ENCODE measurements at regions of chr19 and their contacts with region 1.

Region 1: DNA sequence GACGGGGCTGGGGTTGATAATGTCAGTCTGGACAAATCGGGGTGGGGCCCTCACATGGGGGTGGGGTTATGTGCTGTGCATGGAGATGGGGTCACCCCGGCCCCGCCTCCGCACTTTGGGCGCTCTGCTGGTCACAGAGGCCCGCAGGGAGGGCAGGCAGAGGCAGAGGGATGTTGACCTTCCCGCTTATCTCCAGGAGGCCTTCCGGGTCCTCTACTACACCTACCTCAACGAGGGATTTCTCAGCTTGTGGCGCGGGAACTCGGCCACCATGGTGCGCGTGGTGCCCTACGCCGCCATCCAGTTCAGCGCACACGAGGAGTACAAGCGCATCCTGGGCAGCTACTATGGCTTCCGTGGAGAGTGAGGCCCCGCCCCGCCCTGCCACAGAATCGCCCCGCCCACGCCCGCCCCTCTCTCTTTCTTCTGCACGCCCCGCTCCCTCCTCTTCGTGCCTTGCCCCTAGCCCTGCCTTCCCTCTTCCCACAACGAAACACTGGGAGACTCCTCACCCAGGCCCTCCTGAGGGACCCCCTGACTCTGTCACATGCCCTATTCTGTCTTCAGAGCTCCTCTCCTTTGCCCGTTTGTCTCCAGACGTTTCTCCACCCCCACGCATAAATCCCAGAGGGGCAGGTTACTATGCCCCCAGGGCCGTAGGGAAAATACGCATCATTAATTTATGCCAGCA is 32.8 kb downstream of the TMEM161A start:
- DNase-seq: peak; percentile 92 to 95 (median 93)
- ATAC-seq: peak; percentile 96
- H3K4me3 ChIP-seq: peak overlapping the region; percentile 41
- H3K27ac ChIP-seq: peak overlapping the region; percentile 75
- H3K4me1 ChIP-seq: peaks cover 14 to 45% of the 10 kb centered on the region in 2 experiments
- H3K27me3 ChIP-seq: no peaks in the 10 kb centered on the region
- CTCF ChIP-seq: no peak
- EP300 ChIP-seq: peak; percentile 5; the same call in 1 of the 2 replicates
- POLR2A ChIP-seq: peak; percentile 89
- RAD21 ChIP-seq: no peak

Region 2: DNA sequence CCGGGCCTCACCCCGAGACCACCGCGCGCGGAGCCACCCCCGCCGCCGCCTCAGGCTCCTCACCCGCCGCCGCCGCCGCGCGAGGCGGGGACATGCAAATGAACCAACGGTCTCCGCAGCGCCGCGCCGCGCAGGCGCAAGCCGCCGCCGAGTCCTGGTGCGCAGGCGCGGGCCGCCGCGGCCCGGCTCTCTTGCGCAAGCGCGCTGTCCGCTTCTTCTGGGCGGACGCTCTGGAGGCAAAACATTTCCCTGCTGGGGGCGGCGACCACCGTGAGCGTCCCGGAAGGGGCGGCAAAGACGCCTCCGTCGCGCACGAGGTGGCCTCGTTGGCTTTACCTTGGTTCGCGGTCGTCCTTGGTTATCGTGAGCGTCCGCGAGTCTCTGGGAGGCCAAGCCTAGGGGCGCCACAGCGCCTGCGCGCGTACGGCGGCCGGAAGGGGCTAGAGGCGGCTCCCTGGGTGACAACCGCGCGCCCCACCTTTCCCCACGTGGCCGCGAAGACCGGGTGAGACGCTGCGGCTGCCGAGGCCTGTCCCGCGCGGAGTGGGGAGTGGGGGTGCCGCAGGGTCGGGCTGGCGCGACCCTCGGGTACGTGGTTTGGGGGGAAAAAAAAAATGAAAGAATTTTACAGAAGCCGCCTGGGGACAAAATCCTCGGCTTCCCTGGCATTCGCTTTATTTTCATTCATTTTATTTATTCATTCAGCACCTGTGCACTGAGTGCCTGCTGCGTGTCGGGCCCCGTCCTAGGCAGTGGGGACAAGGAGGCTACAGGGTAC is 71.9 kb before region 1 on chr19 and contains the starts of genes ARMC6 and SUGP2:
- CTCF ChIA-PET with region 1: no interaction called
- POLR2A ChIA-PET with region 1: no interaction called
- in situ Hi-C with region 1: no loop called
- intact Hi-C with region 1: loop called (anchors 2 kb)
- DNase-seq: peak; percentile 93 to 98 (median 97)
- ATAC-seq: peak; percentile 88
- H3K4me3 ChIP-seq: peak within 1 kb of the TSS; percentile 98
- H3K27ac ChIP-seq: peak within 1 kb of the TSS; percentile 99
- H3K4me1 ChIP-seq: peaks cover 4 to 30% of the 10 kb centered on the region in 2 experiments; a peak in 3 of 5 replicates
- H3K27me3 ChIP-seq: no peaks in the 10 kb centered on the region
- CTCF ChIP-seq: peak in 1 of 3 experiments; percentile 8; a peak in 1 of 6 replicates
- EP300 ChIP-seq: peak; percentile 7; the same call in 1 of the 2 replicates
- POLR2A ChIP-seq: peak; percentile 69; the same call in 1 of the 2 replicates
- RAD21 ChIP-seq: no peak
- polyA plus RNA-seq, gene ARMC6: 2.1 to 5.4 TPM
- polyA plus RNA-seq, gene SUGP2: 13.1 to 22.6 TPM

Region 3: DNA sequence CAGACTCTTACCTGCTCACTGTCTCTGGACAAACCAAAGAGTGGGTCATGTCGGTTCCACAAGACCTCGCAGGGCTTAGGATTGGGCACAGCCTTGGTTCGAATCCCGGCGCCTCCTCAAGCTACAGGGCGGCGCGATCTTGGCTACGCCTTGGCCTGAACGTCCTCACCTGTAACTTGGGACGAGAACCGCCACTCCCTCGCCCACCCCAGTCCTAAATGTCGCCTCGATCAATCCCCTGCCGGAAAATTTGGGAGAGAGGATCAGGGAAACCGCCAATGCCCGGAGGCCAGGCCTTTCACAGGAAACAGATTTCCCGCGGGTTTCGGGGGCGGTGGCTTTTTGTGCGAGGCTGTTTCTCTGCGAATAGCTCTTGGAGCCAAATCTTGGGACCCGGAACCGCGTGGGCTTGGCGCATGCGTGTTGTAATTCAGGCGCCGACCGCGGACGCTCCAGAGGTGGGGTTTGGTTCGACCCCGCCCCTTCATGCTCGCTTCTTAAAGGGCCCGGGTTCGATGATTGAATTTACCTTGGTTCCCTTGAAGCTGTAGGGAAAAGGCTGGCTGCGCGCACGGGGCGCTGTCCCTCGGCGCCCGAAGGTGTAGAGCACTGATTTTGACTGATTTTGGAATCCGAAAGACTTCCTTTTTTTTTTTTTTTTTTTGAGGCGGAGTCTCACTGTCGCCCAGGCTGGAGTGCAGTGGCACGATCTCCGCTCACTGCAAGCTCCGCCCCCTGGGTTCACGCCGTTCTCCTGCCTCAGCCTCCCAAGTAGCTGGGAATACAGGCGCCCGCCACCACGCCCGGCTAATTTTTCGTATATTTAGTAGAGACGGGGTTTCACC is 97.7 kb after region 1 on chr19 and contains the start of gene NR2C2AP:
- CTCF ChIA-PET with region 1: no interaction called
- POLR2A ChIA-PET with region 1: no interaction called
- in situ Hi-C with region 1: no loop called
- intact Hi-C with region 1: no loop called
- DNase-seq: peak; percentile 95 to 98 (median 96)
- ATAC-seq: peak; percentile 94
- H3K4me3 ChIP-seq: peak within 1 kb of the TSS; percentile 43
- H3K27ac ChIP-seq: peak within 1 kb of the TSS; percentile 79
- H3K4me1 ChIP-seq: peaks cover 12 to 33% of the 10 kb centered on the region in 2 experiments; a peak in 4 of 5 replicates
- H3K27me3 ChIP-seq: no peaks in the 10 kb centered on the region
- CTCF ChIP-seq: no peak
- EP300 ChIP-seq: no peak
- POLR2A ChIP-seq: peak; percentile 78
- RAD21 ChIP-seq: no peak
- polyA plus RNA-seq, gene NR2C2AP: 55.3 to 77.4 TPM

Region 4: DNA sequence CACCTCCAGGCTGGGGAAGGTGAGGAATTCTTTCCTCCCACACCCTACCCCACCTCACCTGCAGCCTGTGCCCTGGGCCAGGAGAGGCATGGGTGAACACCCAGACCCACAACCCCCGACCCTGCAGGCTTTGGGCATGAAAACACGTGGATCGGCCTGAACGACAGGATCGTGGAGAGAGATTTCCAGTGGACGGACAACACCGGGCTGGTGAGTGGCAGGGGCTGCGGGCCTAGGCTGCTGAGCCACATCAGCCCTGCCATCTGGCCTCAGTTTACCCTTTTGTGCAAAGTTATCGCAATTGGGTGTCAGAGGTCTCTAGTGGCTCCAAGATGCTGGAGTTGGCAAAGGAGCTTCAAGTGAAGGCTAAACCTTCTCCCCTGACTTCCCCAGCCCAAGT is 135.0 kb after region 1 on chr19:
- CTCF ChIA-PET with region 1: no interaction called
- POLR2A ChIA-PET with region 1: no interaction called
- in situ Hi-C with region 1: no loop called
- intact Hi-C with region 1: no loop called
- DNase-seq: no peak
- ATAC-seq: no peak
- H3K4me3 ChIP-seq: no peak overlapping the region
- H3K27ac ChIP-seq: no peak overlapping the region
- H3K4me1 ChIP-seq: peaks cover 0 to 4% of the 10 kb centered on the region in 2 experiments; a peak in 2 of 5 replicates
- H3K27me3 ChIP-seq: peaks cover 7 to 21% of the 10 kb centered on the region in 2 experiments; a peak in 3 of 5 replicates
- CTCF ChIP-seq: no peak
- EP300 ChIP-seq: no peak
- POLR2A ChIP-seq: no peak
- RAD21 ChIP-seq: no peak